ENCODE measurements at regions of chr2 and their contacts with region 1.

Region 1: GRCh38 chr2:174971865-174972781 is 33.1 kb downstream of the CHN1 start:
- DNase-seq: peak; percentile 68
- H3K4me3 ChIP-seq: peak overlapping the region in 1 of 3 experiments; percentile 26
- H3K27ac ChIP-seq: peak overlapping the region; percentile 42
- H3K4me1 ChIP-seq: peaks cover 23% of the 10 kb centered on the region
- H3K27me3 ChIP-seq: no peaks in the 10 kb centered on the region
- CTCF ChIP-seq: no peak

Region 2: GRCh38 chr2:174577967-174578589 is 394.0 kb before region 1 on chr2:
- dilution Hi-C with region 1: no loop called
- DNase-seq: no peak
- H3K4me3 ChIP-seq: no peak overlapping the region
- H3K27ac ChIP-seq: no peak overlapping the region
- H3K4me1 ChIP-seq: no peaks in the 10 kb centered on the region
- H3K27me3 ChIP-seq: no peaks in the 10 kb centered on the region
- CTCF ChIP-seq: peak; percentile 29 to 62 (median 38)

Region 3: GRCh38 chr2:174771631-174772471 is 200.3 kb before region 1 on chr2:
- dilution Hi-C with region 1: loop called (anchors 25 kb)
- DNase-seq: peak; percentile 25
- H3K4me3 ChIP-seq: no peak overlapping the region
- H3K27ac ChIP-seq: no peak overlapping the region
- H3K4me1 ChIP-seq: peaks cover 9% of the 10 kb centered on the region
- H3K27me3 ChIP-seq: peaks cover 3% of the 10 kb centered on the region
- CTCF ChIP-seq: peak; percentile 81 to 90 (median 89)

Region 4: GRCh38 chr2:174878537-174879147 is 93.5 kb before region 1 on chr2:
- dilution Hi-C with region 1: no loop called
- DNase-seq: no peak
- H3K4me3 ChIP-seq: peak overlapping the region in 2 of 3 experiments; percentile 24 to 46
- H3K27ac ChIP-seq: no peak overlapping the region
- H3K4me1 ChIP-seq: peaks cover 4% of the 10 kb centered on the region
- H3K27me3 ChIP-seq: no peaks in the 10 kb centered on the region
- CTCF ChIP-seq: no peak

Region 5: GRCh38 chr2:174914853-174915760 is 57.0 kb before region 1 on chr2:
- dilution Hi-C with region 1: loop called (anchors 5 kb)
- DNase-seq: no peak
- H3K4me3 ChIP-seq: no peak overlapping the region
- H3K27ac ChIP-seq: no peak overlapping the region
- H3K4me1 ChIP-seq: no peaks in the 10 kb centered on the region
- H3K27me3 ChIP-seq: no peaks in the 10 kb centered on the region
- CTCF ChIP-seq: no peak

Measured in keratinocyte (primary cell).